Posterior cingulate gyrus (tissue), 11 donors: ENCODE measurements at regions of chr15 and their contacts with region 1.

Region 1: GRCh38 chr15:62071711-62072308 is 5.0 kb downstream of the C2CD4A start:
- DNase-seq: no peak

Region 2: GRCh38 chr15:60713119-60714084 is 1358.4 kb before region 1 on chr15:
- intact Hi-C with region 1: no loop called
- DNase-seq: no peak

Region 3: GRCh38 chr15:61871926-61872522 is 199.8 kb before region 1 on chr15:
- intact Hi-C with region 1: loop called (anchors 1 kb)
- DNase-seq: no peak

Region 4: DNA sequence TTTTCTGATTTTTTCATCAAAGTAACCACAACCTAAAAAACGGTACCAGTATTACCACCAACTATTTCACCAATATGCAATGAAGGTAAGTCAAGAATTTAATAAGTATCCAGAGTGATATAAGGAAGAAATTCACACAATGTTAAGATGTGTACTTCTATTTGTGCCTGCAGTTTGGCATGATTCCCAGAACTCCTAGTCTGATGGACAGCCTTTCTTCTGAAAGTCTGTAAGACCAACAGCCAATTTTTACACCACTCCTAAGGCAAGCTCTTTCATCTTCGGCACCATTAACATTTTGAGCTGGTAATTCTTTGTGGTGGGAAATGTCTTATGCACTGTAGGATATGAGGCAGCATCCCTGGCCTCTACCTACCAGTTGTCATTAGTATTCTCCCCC is 119.9 kb before region 1 on chr15:
- intact Hi-C with region 1: no loop called
- DNase-seq: no peak